Caco-2 (cell line): ENCODE measurements at regions of chr5 and their contacts with region 1.

Region 1: DNA sequence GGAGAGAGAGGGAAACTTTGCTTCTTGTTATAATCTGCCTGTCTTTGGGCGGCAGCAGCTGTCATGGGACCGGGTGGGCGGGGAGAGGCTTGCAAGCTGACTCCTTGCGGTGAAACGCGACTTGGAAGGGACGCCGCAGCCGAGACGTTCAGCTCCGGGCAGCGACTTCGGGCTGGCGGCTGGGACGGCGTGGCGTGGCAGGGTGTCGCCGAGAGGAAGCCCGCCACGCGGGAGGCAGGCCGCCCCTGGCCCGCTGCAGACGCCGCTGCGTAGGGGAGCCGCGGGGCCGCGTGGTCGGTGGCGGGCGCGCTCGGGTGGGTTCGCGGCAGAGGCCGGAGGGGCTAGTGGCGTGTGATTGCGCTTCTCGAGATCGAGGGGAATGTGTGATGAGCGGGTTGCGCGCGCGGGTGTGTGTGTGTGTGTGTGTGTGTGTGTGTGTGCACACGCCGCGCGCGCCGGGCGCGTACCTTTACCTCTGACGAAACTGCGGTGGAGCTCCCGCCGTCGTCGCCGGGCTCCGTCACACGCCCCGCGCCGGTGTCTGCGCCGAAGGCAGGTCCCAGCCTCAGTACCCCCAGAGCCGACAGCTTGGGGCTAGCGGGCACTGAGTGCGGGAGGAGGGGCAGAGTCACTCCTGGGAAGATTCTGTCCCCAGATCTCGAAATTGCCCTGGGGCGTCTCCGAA is 1.7 kb downstream of the PPARGC1B start:
- DNase-seq: peak; percentile 72 to 90
- H3K4me3 ChIP-seq: peak overlapping the region; percentile 93
- H3K4me3 Mint-ChIP-seq: peak overlapping the region; percentile 92
- H3K27ac Mint-ChIP-seq: peak overlapping the region; percentile 77
- H3K4me1 ChIP-seq: peaks cover 11% of the 10 kb centered on the region
- H3K4me1 Mint-ChIP-seq: peaks cover 13% of the 10 kb centered on the region
- H3K27me3 ChIP-seq: no peaks in the 10 kb centered on the region
- H3K27me3 Mint-ChIP-seq: no peaks in the 10 kb centered on the region
- CTCF ChIP-seq: peak in 1 of 2 experiments; percentile 23

Region 2: GRCh38 chr5:149172261-149172660 is 559.5 kb before region 1 on chr5:
- CTCF ChIA-PET with region 1: no interaction called
- POLR2A ChIA-PET with region 1: no interaction called
- intact Hi-C with region 1: no loop called
- DNase-seq: no peak
- H3K4me3 ChIP-seq: no peak overlapping the region
- H3K4me3 Mint-ChIP-seq: no peak overlapping the region
- H3K27ac Mint-ChIP-seq: no peak overlapping the region
- H3K4me1 ChIP-seq: peaks cover 11% of the 10 kb centered on the region; the same call in 1 of the 2 replicates
- H3K4me1 Mint-ChIP-seq: peaks cover 11% of the 10 kb centered on the region
- H3K27me3 ChIP-seq: no peaks in the 10 kb centered on the region
- H3K27me3 Mint-ChIP-seq: peaks cover 15% of the 10 kb centered on the region
- CTCF ChIP-seq: no peak

Region 3: GRCh38 chr5:149656576-149657182 is 75.1 kb before region 1 on chr5:
- CTCF ChIA-PET with region 1: interaction called, 8 read pairs
- POLR2A ChIA-PET with region 1: no interaction called
- intact Hi-C with region 1: loop called (anchors 1 kb)
- DNase-seq: peak; percentile 67 to 71
- H3K4me3 ChIP-seq: no peak overlapping the region
- H3K4me3 Mint-ChIP-seq: no peak overlapping the region
- H3K27ac Mint-ChIP-seq: no peak overlapping the region
- H3K4me1 ChIP-seq: no peaks in the 10 kb centered on the region
- H3K4me1 Mint-ChIP-seq: no peaks in the 10 kb centered on the region
- H3K27me3 ChIP-seq: no peaks in the 10 kb centered on the region
- H3K27me3 Mint-ChIP-seq: no peaks in the 10 kb centered on the region
- CTCF ChIP-seq: peak; percentile 82 to 85

Region 4: DNA sequence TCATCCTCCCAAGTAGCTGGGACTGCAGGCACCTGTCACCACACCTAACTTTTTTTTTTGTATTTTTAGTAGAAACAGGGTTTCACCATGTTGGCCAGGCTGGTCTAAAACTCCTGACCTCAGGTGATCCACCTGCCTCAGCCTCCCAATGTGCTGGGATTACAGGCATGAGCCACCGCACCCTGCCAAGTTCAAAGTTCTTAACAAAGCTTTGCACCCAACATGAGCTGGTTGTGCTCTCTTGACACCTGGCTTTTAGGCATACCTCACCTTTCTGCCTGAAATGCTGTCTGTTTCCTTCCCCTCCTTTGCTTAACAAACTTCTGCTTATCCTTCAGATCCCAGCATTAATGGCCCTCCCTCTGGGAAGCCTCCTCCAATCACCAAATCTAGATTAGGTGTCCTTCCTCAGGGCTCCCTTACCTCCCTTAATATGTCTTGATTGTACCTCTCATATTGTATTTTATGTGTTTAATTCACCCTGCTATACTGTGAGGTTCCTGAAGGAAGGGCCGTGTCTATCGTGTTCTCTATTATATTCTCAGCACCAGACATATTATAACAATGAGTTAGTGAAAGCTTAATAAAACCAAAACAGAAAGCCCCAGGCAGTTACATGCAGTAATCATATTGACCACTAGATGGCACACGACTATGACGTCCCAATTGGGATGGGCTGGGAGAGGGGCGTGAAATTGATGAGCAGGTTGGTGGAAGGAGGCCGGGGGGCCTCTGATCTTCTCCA is 64.5 kb before region 1 on chr5:
- CTCF ChIA-PET with region 1: interaction called, 7 read pairs
- POLR2A ChIA-PET with region 1: no interaction called
- intact Hi-C with region 1: loop called (anchors 1 kb)
- DNase-seq: peak in 1 of 2 experiments; percentile 53
- H3K4me3 ChIP-seq: no peak overlapping the region
- H3K4me3 Mint-ChIP-seq: no peak overlapping the region
- H3K27ac Mint-ChIP-seq: no peak overlapping the region
- H3K4me1 ChIP-seq: no peaks in the 10 kb centered on the region
- H3K4me1 Mint-ChIP-seq: no peaks in the 10 kb centered on the region
- H3K27me3 ChIP-seq: no peaks in the 10 kb centered on the region
- H3K27me3 Mint-ChIP-seq: no peaks in the 10 kb centered on the region
- CTCF ChIP-seq: peak; percentile 78 to 89

Region 5: GRCh38 chr5:149702934-149703646 is 28.7 kb before region 1 on chr5:
- CTCF ChIA-PET with region 1: no interaction called
- POLR2A ChIA-PET with region 1: interaction called, 6 read pairs
- intact Hi-C with region 1: loop called (anchors 1 kb)
- DNase-seq: peak; percentile 68 to 91
- H3K4me3 ChIP-seq: no peak overlapping the region
- H3K4me3 Mint-ChIP-seq: peak overlapping the region; percentile 43
- H3K27ac Mint-ChIP-seq: peak overlapping the region; percentile 78
- H3K4me1 ChIP-seq: peaks cover 41% of the 10 kb centered on the region
- H3K4me1 Mint-ChIP-seq: peaks cover 20% of the 10 kb centered on the region
- H3K27me3 ChIP-seq: no peaks in the 10 kb centered on the region
- H3K27me3 Mint-ChIP-seq: no peaks in the 10 kb centered on the region
- CTCF ChIP-seq: no peak

Region 6: DNA sequence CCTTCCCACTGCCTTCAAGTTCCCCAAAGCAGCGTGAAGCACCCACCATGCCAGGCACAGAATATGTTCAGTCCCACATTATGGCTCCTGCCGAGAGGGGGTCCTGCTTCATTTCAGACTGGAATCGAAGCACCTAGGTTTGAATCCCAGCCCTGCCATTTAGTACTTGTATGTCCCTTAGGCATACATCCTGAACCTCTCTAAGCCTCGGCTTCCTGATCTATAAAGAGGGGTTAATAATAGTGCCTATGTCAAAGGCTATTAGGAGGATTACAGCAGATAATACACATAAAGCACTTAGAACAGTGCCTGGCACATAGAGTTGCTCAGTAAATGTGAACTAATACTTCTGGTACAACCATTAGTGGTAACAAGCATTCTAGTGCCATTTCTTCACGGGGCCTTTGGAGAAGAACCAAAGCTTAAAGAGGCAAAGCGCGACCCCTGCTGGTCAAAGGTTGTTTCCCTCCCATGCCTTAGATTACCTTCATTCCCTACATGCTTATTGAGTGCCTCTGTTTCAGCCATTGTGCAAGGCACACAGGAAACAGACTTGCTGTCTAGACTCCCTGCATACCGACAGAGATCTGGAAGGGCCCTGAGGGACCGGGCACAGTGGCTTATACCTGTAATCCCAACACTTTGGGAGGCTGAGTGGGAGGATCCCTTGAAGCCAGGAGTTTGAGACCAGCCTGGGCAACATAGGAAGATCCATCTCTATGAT is 96.5 kb after region 1 on chr5:
- CTCF ChIA-PET with region 1: interaction called, 4 read pairs
- POLR2A ChIA-PET with region 1: no interaction called
- intact Hi-C with region 1: loop called (anchors 1 kb)
- DNase-seq: peak; percentile 85 to 89
- H3K4me3 ChIP-seq: no peak overlapping the region
- H3K4me3 Mint-ChIP-seq: no peak overlapping the region
- H3K27ac Mint-ChIP-seq: no peak overlapping the region
- H3K4me1 ChIP-seq: no peaks in the 10 kb centered on the region
- H3K4me1 Mint-ChIP-seq: no peaks in the 10 kb centered on the region
- H3K27me3 ChIP-seq: no peaks in the 10 kb centered on the region
- H3K27me3 Mint-ChIP-seq: no peaks in the 10 kb centered on the region
- CTCF ChIP-seq: peak; percentile 84 to 94

Region 7: DNA sequence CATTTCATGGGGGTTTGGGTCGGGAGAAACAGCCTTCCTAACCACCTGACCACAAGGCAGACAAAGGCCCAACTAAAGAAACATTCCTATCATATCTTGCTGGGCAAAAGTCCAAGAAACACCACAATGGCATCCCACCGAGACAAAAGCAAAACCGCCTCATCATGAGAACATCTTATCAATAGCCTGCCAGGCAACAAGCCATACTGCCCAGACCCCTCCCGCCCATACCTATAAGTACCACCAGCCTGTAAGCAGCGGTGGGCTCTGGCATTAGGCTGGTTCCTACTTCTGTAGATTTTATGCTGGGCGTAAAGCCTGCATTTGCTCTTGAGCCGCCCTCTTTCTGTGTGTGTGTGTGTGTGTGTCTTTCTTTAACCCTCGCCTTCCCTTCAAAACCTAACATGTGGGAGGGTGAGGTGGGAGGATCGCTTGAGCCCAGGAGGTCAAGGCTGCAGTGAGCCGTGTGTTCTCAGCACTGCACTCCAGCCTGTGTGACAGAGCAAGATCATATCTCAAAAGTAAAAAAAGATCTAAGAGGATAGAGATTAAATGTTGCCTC is 155.9 kb after region 1 on chr5:
- CTCF ChIA-PET with region 1: no interaction called
- POLR2A ChIA-PET with region 1: no interaction called
- intact Hi-C with region 1: no loop called
- DNase-seq: peak; percentile 84 to 88
- H3K4me3 ChIP-seq: peak overlapping the region; percentile 5; the same call in 1 of the 2 replicates
- H3K4me3 Mint-ChIP-seq: peak overlapping the region; percentile 64
- H3K27ac Mint-ChIP-seq: peak overlapping the region; percentile 90
- H3K4me1 ChIP-seq: peaks cover 25% of the 10 kb centered on the region
- H3K4me1 Mint-ChIP-seq: peaks cover 21% of the 10 kb centered on the region
- H3K27me3 ChIP-seq: no peaks in the 10 kb centered on the region
- H3K27me3 Mint-ChIP-seq: no peaks in the 10 kb centered on the region
- CTCF ChIP-seq: no peak